ENCODE measurements at regions of chr10 and their contacts with region 1.

Region 1: GRCh38 chr10:119207367-119207668 is at the start of gene GRK5:
- DNase-seq: peak; percentile 95 to 99 (median 98)
- H3K4me3 ChIP-seq: peak within 1 kb of the TSS; percentile 61 to 83 (median 73)
- H3K27ac ChIP-seq: peak within 1 kb of the TSS; percentile 90 to 92
- H3K4me1 ChIP-seq: peaks cover 0 to 13% (median 2%) of the 10 kb centered on the region in 3 donors
- H3K27me3 ChIP-seq: no peaks in the 10 kb centered on the region
- CTCF ChIP-seq: no peak
- total RNA-seq, gene GRK5: 18.7 TPM

Region 2: DNA sequence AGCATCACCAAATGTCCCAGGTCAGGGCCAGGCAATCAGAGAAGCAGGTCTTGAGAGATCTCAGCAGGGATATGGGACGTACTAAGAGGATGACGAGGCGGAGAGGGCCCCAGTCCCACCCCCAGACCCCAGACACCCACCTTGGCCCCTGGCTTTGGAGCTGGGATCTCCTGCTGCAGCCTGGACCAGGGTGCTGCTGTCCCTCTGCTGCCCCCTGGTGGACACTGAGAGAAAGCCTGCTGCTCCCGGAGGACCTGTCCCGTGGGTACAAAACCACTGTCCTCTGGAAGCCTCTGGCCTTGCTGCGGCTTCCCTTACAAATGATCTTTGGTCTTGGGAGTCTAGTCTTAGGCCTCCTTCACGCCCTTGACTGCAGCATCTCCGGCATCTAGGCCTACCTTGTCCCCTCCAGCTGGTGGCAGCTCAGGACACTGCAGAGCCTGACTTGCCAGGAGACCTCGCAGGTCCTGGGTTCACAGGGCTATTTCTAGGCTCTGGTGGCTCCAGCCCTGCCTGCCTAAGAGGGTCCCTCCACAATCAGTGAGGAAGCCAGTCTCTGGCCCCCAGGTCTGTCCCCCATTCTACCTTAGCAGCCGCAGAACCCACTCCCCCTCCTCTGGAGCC is 238.1 kb after region 1 on chr10:
- intact Hi-C with region 1: loop called (anchors 10 kb)
- DNase-seq: peak; percentile 83 to 91 (median 90)
- H3K4me3 ChIP-seq: no peak overlapping the region
- H3K27ac ChIP-seq: no peak overlapping the region
- H3K4me1 ChIP-seq: peaks cover 0 to 8% (median 0%) of the 10 kb centered on the region in 3 donors
- H3K27me3 ChIP-seq: no peaks in the 10 kb centered on the region
- CTCF ChIP-seq: peak; percentile 95

Measured in kidney (tissue), 22 donors.